ENCODE measurements at regions of chr15 and their contacts with region 1.

Region 1: GRCh38 chr15:38378161-38378560 is 75.8 kb upstream of the FAM98B start:
- DNase-seq: no peak
- H3K4me3 ChIP-seq: no peak overlapping the region
- H3K27ac ChIP-seq: no peak overlapping the region
- H3K27me3 ChIP-seq: no peaks in the 10 kb centered on the region
- CTCF ChIP-seq: no peak

Region 2: DNA sequence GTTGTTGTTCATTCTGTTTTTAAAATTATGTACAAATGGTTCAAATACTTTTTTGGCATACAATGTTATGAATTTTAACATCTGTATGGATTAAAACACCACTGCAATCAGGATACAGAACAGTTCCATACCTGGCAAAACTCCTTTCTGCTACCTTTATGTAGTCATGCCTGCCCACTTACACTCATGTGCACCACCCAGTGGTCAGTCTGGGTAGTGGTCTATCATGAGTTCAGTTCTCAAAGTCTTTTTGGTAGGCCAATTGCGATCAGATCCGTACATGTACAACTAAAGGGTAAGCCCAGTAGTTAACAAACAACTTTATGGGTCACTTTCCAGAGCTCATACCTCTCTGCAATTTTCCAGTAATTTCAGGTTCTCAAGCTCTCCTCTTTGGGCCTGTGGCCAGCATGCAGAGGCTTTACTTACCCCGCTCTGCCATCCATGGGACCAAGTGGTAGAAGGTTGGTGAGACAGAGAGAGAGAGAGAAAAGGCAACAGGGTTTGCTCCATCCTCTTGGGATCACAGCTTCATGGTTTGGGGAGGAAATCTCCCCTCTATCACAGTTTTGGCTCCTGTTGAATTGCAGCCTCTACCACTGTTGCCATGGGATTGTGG is 11.9 kb after region 1 on chr15:
- CTCF ChIA-PET with region 1: interaction called, 13 read pairs
- POLR2A ChIA-PET with region 1: no interaction called
- DNase-seq: no peak
- H3K4me3 ChIP-seq: no peak overlapping the region
- H3K27ac ChIP-seq: no peak overlapping the region
- H3K27me3 ChIP-seq: no peaks in the 10 kb centered on the region
- CTCF ChIP-seq: peak; percentile 89

Measured in AG04450 (cell line).